Kidney (tissue), 22 donors: ENCODE measurements at regions of chr15 and their contacts with region 1.

Region 1: GRCh38 chr15:69394556-69395282 is 19.4 kb upstream of the KIF23 start:
- DNase-seq: peak; percentile 89 to 92 (median 89)
- H3K4me3 ChIP-seq: no peak overlapping the region
- H3K27ac ChIP-seq: peak overlapping the region in 1 of 2 donors; percentile 49
- H3K4me1 ChIP-seq: peaks cover 0 to 22% (median 22%) of the 10 kb centered on the region in 3 donors
- H3K27me3 ChIP-seq: no peaks in the 10 kb centered on the region
- CTCF ChIP-seq: peak; percentile 97

Region 2: GRCh38 chr15:69058830-69059556 is 335.7 kb before region 1 on chr15:
- intact Hi-C with region 1: loop called (anchors 10 kb)
- DNase-seq: peak; percentile 88 to 97 (median 94)
- H3K4me3 ChIP-seq: peak overlapping the region in 1 of 3 donors; percentile 41
- H3K27ac ChIP-seq: no peak overlapping the region
- H3K4me1 ChIP-seq: peaks cover 0 to 12% (median 6%) of the 10 kb centered on the region in 3 donors
- H3K27me3 ChIP-seq: no peaks in the 10 kb centered on the region
- CTCF ChIP-seq: peak; percentile 91

Region 3: GRCh38 chr15:69244798-69245197 is 149.9 kb before region 1 on chr15:
- intact Hi-C with region 1: no loop called
- DNase-seq: no peak
- H3K4me3 ChIP-seq: no peak overlapping the region
- H3K27ac ChIP-seq: no peak overlapping the region
- H3K4me1 ChIP-seq: peaks cover 0 to 3% (median 0%) of the 10 kb centered on the region in 3 donors
- H3K27me3 ChIP-seq: no peaks in the 10 kb centered on the region
- CTCF ChIP-seq: no peak

Region 4: DNA sequence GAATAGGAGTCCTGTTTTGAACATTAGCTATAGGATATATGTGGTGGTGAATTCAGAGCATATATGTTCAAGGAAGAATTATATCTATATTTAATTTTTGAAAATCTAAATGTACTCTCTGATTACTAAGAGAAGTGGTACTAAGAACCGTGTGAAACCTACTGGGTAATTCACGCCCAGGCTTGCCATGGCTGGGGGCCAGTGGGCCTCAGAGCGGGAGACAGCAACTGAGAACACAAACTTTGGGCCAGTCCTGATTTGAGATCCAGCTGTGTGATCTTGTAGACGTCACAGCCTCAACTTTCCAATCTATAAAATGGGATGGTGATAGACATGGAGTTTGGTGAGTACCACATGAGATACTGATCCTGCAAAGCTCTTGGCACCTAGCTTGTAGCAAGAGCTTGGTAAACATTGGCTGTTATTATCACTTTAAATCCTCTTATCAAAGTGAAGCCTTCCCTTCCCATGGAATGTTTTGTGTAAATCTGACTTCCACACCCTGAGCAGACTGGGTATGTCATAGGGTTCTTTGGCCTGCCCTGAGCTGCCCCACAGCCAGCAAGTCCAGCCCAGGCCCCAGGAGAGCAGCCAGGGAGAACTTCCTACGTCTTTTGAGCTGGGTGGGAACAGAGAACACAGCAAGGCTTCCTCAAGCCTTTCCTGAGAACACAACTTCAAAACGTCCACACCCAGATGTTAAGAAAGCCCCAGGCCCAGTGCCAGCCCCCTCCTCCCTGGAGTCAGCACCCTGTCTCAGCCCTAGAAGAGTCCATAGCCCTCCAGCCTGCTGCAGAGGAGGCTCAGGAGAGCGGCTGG is 104.2 kb before region 1 on chr15:
- intact Hi-C with region 1: no loop called
- DNase-seq: no peak
- H3K4me3 ChIP-seq: no peak overlapping the region
- H3K27ac ChIP-seq: peak overlapping the region; percentile 29 to 52
- H3K4me1 ChIP-seq: peaks cover 0 to 35% (median 0%) of the 10 kb centered on the region in 3 donors
- H3K27me3 ChIP-seq: no peaks in the 10 kb centered on the region
- CTCF ChIP-seq: no peak

Region 5: DNA sequence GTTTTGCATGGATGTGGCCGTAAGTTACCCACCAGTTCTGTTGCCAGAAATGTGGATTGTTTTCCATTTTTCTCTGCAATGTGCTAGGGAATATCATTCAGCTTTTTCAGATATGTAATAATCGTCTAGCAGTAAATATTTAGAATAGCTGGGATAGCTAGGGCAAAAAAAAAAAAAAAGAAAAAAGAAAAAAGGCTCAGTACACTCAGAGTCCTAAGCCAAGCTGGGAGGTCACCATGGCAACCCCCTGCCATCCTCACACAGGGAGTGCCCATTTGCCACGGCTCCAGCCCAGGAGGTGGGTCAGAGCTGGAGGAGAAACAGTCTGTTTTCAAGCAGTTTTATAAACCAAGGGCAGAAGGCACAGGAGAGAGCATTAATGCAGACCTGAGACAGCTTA is 70.8 kb before region 1 on chr15:
- intact Hi-C with region 1: no loop called
- DNase-seq: peak in 2 of 5 donors; percentile 36 to 59
- H3K4me3 ChIP-seq: no peak overlapping the region
- H3K27ac ChIP-seq: peak overlapping the region in 1 of 2 donors; percentile 3
- H3K4me1 ChIP-seq: peaks cover 0 to 44% (median 36%) of the 10 kb centered on the region in 3 donors
- H3K27me3 ChIP-seq: no peaks in the 10 kb centered on the region
- CTCF ChIP-seq: no peak

Region 6: DNA sequence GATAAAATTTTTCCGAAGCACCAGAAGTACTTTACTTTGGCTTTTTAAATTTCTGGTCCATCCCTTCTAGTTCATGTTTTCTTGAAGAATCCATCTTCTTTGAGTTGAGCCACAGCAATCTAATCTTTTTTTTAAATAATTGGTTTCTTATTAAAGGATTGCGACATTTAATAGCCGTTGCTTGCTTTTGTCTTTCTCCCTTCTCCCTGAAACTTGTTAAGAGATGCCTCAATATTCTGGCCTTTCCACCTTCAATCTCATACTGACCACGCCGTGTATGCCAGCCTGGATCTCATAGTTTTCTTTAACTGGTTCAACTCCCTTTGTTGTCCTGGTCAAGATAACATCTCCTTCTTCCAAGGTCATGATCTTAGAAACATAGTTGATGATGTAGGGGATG is 39.5 kb after region 1 on chr15:
- intact Hi-C with region 1: no loop called
- DNase-seq: no peak
- H3K4me3 ChIP-seq: no peak overlapping the region
- H3K27ac ChIP-seq: no peak overlapping the region
- H3K4me1 ChIP-seq: no peaks in the 10 kb centered on the region
- H3K27me3 ChIP-seq: no peaks in the 10 kb centered on the region
- CTCF ChIP-seq: no peak